Heart left ventricle (tissue), 16 donors: ENCODE measurements at regions of chr1 and their contacts with region 1.

Region 1: GRCh38 chr1:48498096-48498791 is 26.2 kb upstream of the SPATA6 start:
- DNase-seq: peak; percentile 68 to 82 (median 80)
- ATAC-seq: peak; percentile 81 to 93 (median 90)
- H3K4me3 ChIP-seq: peak overlapping the region in 2 of 12 donors; percentile 13 to 14
- H3K27ac ChIP-seq: no peak overlapping the region
- H3K4me1 ChIP-seq: peaks cover 0 to 9% (median 2%) of the 10 kb centered on the region in 12 donors
- H3K27me3 ChIP-seq: no peaks in the 10 kb centered on the region
- CTCF ChIP-seq: peak; percentile 81 to 98 (median 91)
- POLR2A ChIP-seq: no peak

Region 2: GRCh38 chr1:48099072-48099773 is 399.0 kb before region 1 on chr1:
- intact Hi-C with region 1: loop called in 2 of 10 experiments (anchors 5 to 10 kb)
- DNase-seq: no peak
- ATAC-seq: no peak
- H3K4me3 ChIP-seq: no peak overlapping the region
- H3K27ac ChIP-seq: no peak overlapping the region
- H3K4me1 ChIP-seq: no peaks in the 10 kb centered on the region
- H3K27me3 ChIP-seq: peaks cover 0 to 11% (median under 1%) of the 10 kb centered on the region in 9 donors
- CTCF ChIP-seq: no peak
- POLR2A ChIP-seq: no peak

Region 3: DNA sequence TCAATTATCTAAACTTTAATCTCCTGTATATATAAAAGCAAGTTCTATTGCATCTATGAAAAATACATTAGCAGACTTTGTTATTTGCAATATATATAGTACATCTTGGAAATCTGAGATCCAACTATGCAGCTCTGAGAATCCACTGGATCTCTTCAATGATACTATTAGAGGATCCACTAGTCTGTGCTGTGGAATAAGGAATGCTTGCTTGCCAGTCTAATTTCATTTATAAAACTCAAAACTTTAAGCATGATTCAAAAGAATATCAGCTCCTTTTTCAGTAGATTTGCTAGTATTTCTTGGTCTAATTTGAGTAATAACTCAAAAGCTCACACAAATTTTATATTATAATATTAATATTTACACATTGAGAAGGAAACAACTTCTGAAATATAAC is 141.3 kb before region 1 on chr1:
- intact Hi-C with region 1: loop called in 3 of 10 experiments (anchors 10 kb)
- DNase-seq: no peak
- ATAC-seq: no peak
- H3K4me3 ChIP-seq: no peak overlapping the region
- H3K27ac ChIP-seq: no peak overlapping the region
- H3K4me1 ChIP-seq: no peaks in the 10 kb centered on the region
- H3K27me3 ChIP-seq: no peaks in the 10 kb centered on the region
- CTCF ChIP-seq: peak in 4 of 12 donors; percentile 8 to 25 (median 20)
- POLR2A ChIP-seq: no peak

Region 4: DNA sequence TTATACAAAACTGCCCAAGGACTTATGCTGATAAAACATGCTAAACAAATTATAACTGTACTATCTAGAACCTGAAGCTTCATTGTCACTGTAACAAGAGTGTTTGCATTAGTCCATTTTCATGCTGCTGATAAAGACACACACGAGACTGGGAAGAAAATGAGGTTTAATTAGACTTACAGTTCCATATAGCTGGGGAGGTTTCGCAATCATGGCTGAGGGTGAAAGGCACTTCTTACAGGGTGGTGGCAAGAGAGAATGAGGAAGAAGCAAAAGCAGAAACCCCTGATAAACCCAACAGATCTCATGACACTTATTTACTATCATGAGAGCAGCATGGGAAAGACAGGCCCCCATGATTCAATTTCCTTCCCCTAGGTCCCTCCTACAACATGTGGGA is 126.6 kb before region 1 on chr1:
- intact Hi-C with region 1: loop called in 1 of 10 experiments (anchors 10 kb)
- DNase-seq: no peak
- ATAC-seq: no peak
- H3K4me3 ChIP-seq: no peak overlapping the region
- H3K27ac ChIP-seq: no peak overlapping the region
- H3K4me1 ChIP-seq: no peaks in the 10 kb centered on the region
- H3K27me3 ChIP-seq: no peaks in the 10 kb centered on the region
- CTCF ChIP-seq: no peak
- POLR2A ChIP-seq: no peak

Region 5: GRCh38 chr1:48430832-48431231 is 67.4 kb before region 1 on chr1:
- intact Hi-C with region 1: no loop called
- DNase-seq: no peak
- ATAC-seq: no peak
- H3K4me3 ChIP-seq: no peak overlapping the region
- H3K27ac ChIP-seq: no peak overlapping the region
- H3K4me1 ChIP-seq: peaks cover 0 to 3% (median 0%) of the 10 kb centered on the region in 12 donors
- H3K27me3 ChIP-seq: no peaks in the 10 kb centered on the region
- CTCF ChIP-seq: no peak
- POLR2A ChIP-seq: no peak

Region 6: GRCh38 chr1:48563021-48563420 is 64.8 kb after region 1 on chr1:
- intact Hi-C with region 1: no loop called
- DNase-seq: no peak
- ATAC-seq: no peak
- H3K4me3 ChIP-seq: no peak overlapping the region
- H3K27ac ChIP-seq: no peak overlapping the region
- H3K4me1 ChIP-seq: no peaks in the 10 kb centered on the region
- H3K27me3 ChIP-seq: no peaks in the 10 kb centered on the region
- CTCF ChIP-seq: no peak
- POLR2A ChIP-seq: no peak